ENCODE measurements at regions of chr18 and their contacts with region 1.

Region 1: DNA sequence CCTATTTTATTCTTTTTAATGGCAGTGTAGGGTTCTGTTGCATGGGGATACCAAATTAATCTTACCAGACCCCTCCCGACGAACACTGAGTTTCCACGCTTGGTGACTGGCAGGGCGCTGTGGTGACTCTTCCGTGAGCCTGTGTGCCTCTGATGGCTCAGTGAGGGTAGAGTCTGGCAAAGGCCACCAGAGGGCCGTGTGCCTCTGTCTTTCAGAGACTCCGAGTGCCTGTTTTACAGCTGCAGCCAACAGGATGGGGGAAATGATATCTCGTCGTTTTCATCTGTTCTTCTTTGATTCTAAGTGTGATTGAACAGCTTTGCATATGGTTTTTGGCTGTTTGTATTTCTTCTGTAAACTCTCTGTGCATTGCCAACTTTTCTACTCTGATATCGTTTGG is 99.8 kb downstream of the ZNF236 start:
- DNase-seq: peak; percentile 5
- H3K4me3 Mint-ChIP-seq: no peak overlapping the region
- H3K27ac Mint-ChIP-seq: no peak overlapping the region
- H3K4me1 Mint-ChIP-seq: peaks cover 5% of the 10 kb centered on the region
- H3K27me3 Mint-ChIP-seq: no peaks in the 10 kb centered on the region
- CTCF ChIP-seq: peak; percentile 10

Region 2: GRCh38 chr18:76903386-76903785 is 18.7 kb before region 1 on chr18:
- CTCF ChIA-PET with region 1: interaction called, 10 read pairs
- POLR2A ChIA-PET with region 1: interaction called, 7 read pairs
- intact Hi-C with region 1: no loop called
- DNase-seq: no peak
- H3K4me3 Mint-ChIP-seq: no peak overlapping the region
- H3K27ac Mint-ChIP-seq: peak overlapping the region; percentile 8
- H3K4me1 Mint-ChIP-seq: no peaks in the 10 kb centered on the region
- H3K27me3 Mint-ChIP-seq: no peaks in the 10 kb centered on the region
- CTCF ChIP-seq: no peak

Measured in MCF 10A (cell line).